T-cell (primary cell): ENCODE measurements at regions of chr7 and their contacts with region 1.

Region 1: GRCh38 chr7:151631968-151632749 is 112.5 kb upstream of the RHEB start:
- DNase-seq: peak; percentile 69 to 95 (median 82)
- ATAC-seq: peak; percentile 87 to 90 (median 88)
- H3K4me3 ChIP-seq: peak overlapping the region; percentile 70 to 76
- H3K4me3 Mint-ChIP-seq: peak overlapping the region; percentile 93 to 100 (median 93)
- H3K27ac ChIP-seq: peak overlapping the region; percentile 69
- H3K27ac Mint-ChIP-seq: peak overlapping the region; percentile 95
- H3K4me1 ChIP-seq: peaks cover 6 to 9% of the 10 kb centered on the region in 2 experiments
- H3K4me1 Mint-ChIP-seq: peaks cover 36 to 38% (median 37%) of the 10 kb centered on the region in 3 donors
- H3K27me3 ChIP-seq: no peaks in the 10 kb centered on the region
- H3K27me3 Mint-ChIP-seq: no peaks in the 10 kb centered on the region

Region 2: DNA sequence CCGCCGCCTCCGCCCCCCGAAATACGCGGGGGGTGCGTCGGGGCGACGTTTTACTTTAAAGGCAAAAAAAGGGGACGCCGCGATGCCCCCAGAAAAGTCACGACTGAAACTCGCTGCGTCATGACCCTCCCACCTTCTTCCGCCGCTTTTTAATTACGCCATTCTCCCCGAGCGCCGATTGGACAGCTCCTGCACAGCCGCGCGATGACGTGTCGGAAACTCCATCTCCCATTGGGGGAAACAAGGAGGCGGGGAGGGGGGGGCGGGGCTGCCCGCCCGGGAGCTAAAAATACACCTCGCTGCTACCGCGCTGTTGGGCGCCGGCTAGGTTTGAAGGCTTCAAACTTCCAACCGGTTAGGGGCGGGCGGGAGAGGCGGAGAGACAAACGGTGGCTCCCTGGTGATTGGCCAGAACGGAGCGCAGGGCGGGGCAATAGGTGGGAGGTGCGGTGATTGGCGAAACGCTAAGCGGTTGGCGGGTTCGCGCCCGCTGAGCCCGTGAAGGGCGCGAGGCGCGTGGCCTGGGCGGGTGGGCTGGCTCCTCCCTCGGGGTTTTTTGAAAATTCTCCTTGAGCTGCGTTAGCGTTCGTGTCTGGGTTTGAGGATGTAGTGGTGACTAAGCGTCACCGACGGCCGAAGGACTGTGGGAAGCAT is 112.3 kb before region 1 on chr7 and contains the start of gene RHEB:
- CTCF ChIA-PET with region 1: interaction called, 5 to 14 read pairs
- POLR2A ChIA-PET with region 1: interaction called, 3 to 4 read pairs
- DNase-seq: peak; percentile 94 to 99 (median 98)
- ATAC-seq: peak; percentile 82 to 87 (median 85)
- H3K4me3 ChIP-seq: peak within 1 kb of the TSS; percentile 64 to 74
- H3K4me3 Mint-ChIP-seq: peak within 1 kb of the TSS; percentile 80 to 94 (median 86)
- H3K27ac ChIP-seq: peak within 1 kb of the TSS; percentile 68
- H3K27ac Mint-ChIP-seq: peak within 1 kb of the TSS; percentile 97
- H3K4me1 ChIP-seq: peaks cover 17 to 35% of the 10 kb centered on the region in 2 experiments
- H3K4me1 Mint-ChIP-seq: peaks cover 37% of the 10 kb centered on the region in 3 donors
- H3K27me3 ChIP-seq: peaks cover 0 to 4% of the 10 kb centered on the region in 2 experiments
- H3K27me3 Mint-ChIP-seq: no peaks in the 10 kb centered on the region
- total RNA-seq, gene RHEB: 35.8 to 46.0 (median 41.6) TPM

Region 3: GRCh38 chr7:151796091-151796870 is 164.1 kb after region 1 on chr7:
- CTCF ChIA-PET with region 1: no interaction called
- POLR2A ChIA-PET with region 1: no interaction called
- DNase-seq: peak in 1 of 35 experiments; percentile 26
- ATAC-seq: no peak
- H3K4me3 ChIP-seq: no peak overlapping the region
- H3K4me3 Mint-ChIP-seq: no peak overlapping the region
- H3K27ac ChIP-seq: no peak overlapping the region
- H3K27ac Mint-ChIP-seq: no peak overlapping the region
- H3K4me1 ChIP-seq: peaks cover 0 to 25% of the 10 kb centered on the region in 2 experiments
- H3K4me1 Mint-ChIP-seq: peaks cover 7 to 33% (median 25%) of the 10 kb centered on the region in 3 donors
- H3K27me3 ChIP-seq: no peaks in the 10 kb centered on the region
- H3K27me3 Mint-ChIP-seq: no peaks in the 10 kb centered on the region

Region 4: DNA sequence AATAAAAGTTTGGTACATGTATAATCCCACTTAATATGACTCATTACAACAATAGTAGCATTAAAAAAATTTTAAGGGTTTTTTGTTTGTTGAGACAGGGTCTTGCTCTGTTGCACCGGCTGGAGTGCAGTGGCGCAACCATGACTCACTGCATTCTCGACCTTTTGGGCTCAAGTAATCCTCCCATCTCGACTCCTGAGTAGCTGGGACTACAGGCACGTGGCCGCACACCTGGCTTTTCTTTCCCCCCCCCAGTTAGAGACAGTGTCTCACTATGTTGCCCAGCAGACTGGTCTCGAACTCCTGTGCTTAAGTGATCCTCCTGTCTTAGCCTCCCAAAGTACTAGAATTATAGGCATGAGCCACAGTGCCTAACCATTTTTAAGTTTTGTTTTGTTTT is 763.0 kb after region 1 on chr7:
- CTCF ChIA-PET with region 1: no interaction called
- POLR2A ChIA-PET with region 1: interaction called in 1 of 2 experiments, 13 read pairs
- DNase-seq: no peak
- ATAC-seq: no peak
- H3K4me3 ChIP-seq: no peak overlapping the region
- H3K4me3 Mint-ChIP-seq: no peak overlapping the region
- H3K27ac ChIP-seq: no peak overlapping the region
- H3K27ac Mint-ChIP-seq: no peak overlapping the region
- H3K4me1 ChIP-seq: peaks cover 0 to 15% of the 10 kb centered on the region in 2 experiments
- H3K4me1 Mint-ChIP-seq: peaks cover 74 to 82% (median 80%) of the 10 kb centered on the region in 3 donors
- H3K27me3 ChIP-seq: no peaks in the 10 kb centered on the region
- H3K27me3 Mint-ChIP-seq: no peaks in the 10 kb centered on the region